ENCODE measurements at regions of chr6 and their contacts with region 1.

Region 1: GRCh38 chr6:70353343-70353913 is 50.5 kb upstream of the COL9A1 start:
- DNase-seq: no peak
- ATAC-seq: no peak
- H3K4me3 ChIP-seq: no peak overlapping the region
- H3K27ac ChIP-seq: no peak overlapping the region
- H3K4me1 ChIP-seq: no peaks in the 10 kb centered on the region
- H3K27me3 ChIP-seq: no peaks in the 10 kb centered on the region; the same call in 1 of the 2 replicates
- CTCF ChIP-seq: no peak

Region 2: DNA sequence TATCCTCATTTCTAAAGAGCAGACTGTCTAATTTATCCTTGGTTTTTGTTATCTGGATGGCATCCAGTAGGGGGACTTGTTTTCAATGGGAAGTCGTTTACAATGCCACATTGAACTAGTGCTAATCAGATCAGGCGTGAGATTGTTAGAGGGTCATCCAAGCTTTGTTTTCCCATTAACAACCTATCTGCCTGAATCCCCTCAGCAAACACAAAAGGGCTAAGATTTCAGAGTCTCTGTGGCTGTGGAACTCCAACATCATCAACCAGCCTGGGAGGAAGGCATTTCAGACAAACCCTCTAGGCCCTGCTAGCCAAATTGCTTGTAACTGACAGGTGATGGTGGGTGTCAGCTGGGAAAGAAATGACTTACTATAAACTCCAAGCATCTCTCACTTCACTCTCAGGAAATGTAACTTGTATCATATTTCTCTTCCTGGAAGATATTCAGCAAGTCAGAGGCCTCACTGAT is 439.4 kb before region 1 on chr6:
- CTCF ChIA-PET with region 1: no interaction called
- POLR2A ChIA-PET with region 1: no interaction called
- in situ Hi-C with region 1: no loop called
- intact Hi-C with region 1: no loop called
- DNase-seq: no peak
- ATAC-seq: no peak
- H3K4me3 ChIP-seq: no peak overlapping the region
- H3K27ac ChIP-seq: no peak overlapping the region
- H3K4me1 ChIP-seq: no peaks in the 10 kb centered on the region
- H3K27me3 ChIP-seq: no peaks in the 10 kb centered on the region
- CTCF ChIP-seq: 0 out of 2 replicates have a peak, but pooled peaks have one; percentile 8

Region 3: DNA sequence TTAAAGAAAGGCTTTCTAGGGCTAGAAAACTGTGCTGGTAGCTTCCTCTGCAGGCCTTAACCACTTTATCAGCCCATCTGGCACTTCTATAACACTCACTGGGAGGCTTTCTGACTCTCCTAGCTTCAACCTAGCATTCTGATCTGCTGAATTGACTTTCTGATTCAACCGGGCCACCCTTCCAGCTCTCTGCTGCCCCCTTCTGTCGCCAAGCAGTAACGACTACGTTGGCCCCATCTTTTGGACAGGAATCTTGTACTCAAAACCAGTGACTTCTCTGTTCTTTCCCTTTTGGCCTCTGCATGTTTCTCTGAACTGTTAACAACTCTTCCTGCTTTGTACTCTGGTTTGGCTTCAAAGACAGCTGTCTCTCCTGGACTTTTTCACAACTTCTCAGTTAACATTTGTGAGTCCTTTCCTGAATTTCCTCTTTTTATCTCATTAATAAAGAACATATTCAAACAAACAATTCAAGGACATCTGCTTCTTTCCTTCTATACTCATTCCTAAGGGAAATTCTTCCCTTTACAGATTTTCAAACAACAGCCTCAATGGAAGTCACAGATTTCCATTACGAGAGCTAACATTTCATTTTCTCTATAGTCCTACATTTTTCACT is 16.0 kb after region 1 on chr6:
- CTCF ChIA-PET with region 1: no interaction called
- POLR2A ChIA-PET with region 1: no interaction called
- in situ Hi-C with region 1: no loop called
- intact Hi-C with region 1: loop called (anchors 1 kb)
- DNase-seq: peak; percentile 67
- ATAC-seq: peak; percentile 93
- H3K4me3 ChIP-seq: no peak overlapping the region
- H3K27ac ChIP-seq: no peak overlapping the region
- H3K4me1 ChIP-seq: no peaks in the 10 kb centered on the region
- H3K27me3 ChIP-seq: peaks cover 14% of the 10 kb centered on the region; the same call in 1 of the 2 replicates
- CTCF ChIP-seq: peak; percentile 98